ENCODE measurements at regions of chr5 and their contacts with region 1.

Region 1: GRCh38 chr5:55159763-55160492 is at the start of gene GPX8:
- DNase-seq: peak; percentile 61
- ATAC-seq: peak; percentile 70
- H3K4me3 Mint-ChIP-seq: no peak within 1 kb of the TSS
- H3K27ac Mint-ChIP-seq: no peak within 1 kb of the TSS
- H3K4me1 Mint-ChIP-seq: peaks cover 4% of the 10 kb centered on the region
- H3K27me3 Mint-ChIP-seq: peaks cover 47% of the 10 kb centered on the region
- total RNA-seq, gene GPX8: not detected

Region 2: DNA sequence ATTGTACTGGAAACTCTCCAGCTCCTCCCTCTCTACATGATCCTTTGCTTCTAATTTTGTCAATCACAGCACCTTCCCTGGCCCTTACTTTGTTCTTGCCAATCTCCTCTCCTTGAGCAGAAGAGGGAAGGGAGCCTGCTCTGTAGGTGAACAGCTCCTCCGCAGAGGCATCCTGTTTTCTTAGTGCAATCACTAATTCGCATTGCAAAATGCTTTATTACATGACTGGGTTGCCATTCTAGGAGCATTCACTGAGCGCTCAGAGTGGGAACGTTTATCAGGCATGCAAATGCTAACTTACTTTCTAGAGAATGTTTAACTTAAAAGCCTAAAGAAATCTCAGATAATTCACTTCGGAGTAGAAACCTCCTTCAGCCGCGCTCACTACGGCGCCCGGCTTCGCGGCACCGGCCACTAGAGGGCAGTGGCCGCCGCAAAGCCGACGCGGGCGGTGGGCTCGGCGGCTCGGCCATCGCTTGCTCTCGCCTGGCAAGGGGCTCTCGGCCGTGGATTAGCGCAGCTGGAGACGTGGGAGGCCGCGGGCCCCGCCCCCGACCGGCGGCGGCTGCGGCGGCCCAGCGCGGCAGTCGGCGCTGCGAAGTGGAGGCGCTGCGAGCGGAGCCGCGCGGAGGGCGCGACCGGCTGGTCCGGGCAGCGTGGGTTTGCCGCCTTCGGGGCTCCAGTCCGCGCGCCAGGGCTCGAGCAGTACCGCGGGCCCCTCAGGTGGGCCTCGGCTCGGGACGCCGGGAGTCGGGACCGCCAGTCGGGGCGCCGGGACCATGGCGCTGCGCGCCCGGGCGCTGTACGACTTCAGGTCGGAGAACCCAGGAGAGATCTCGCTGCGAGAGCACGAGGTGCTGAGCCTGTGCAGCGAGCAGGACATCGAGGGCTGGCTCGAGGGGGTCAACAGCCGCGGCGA is 642.5 kb before region 1 on chr5 and contains the start of gene SNX18:
- CTCF ChIA-PET with region 1: interaction called, 10 read pairs
- POLR2A ChIA-PET with region 1: no interaction called
- DNase-seq: peak; percentile 93
- ATAC-seq: peak; percentile 91
- H3K4me3 Mint-ChIP-seq: peak within 1 kb of the TSS; percentile 79
- H3K27ac Mint-ChIP-seq: no peak within 1 kb of the TSS
- H3K4me1 Mint-ChIP-seq: peaks cover 39% of the 10 kb centered on the region
- H3K27me3 Mint-ChIP-seq: peaks cover 19% of the 10 kb centered on the region
- total RNA-seq, gene SNX18: 17.1 to 19.3 TPM

Region 3: GRCh38 chr5:54852007-54852406 is 307.9 kb before region 1 on chr5:
- CTCF ChIA-PET with region 1: interaction called, 13 read pairs
- POLR2A ChIA-PET with region 1: no interaction called
- DNase-seq: no peak
- ATAC-seq: no peak
- H3K4me3 Mint-ChIP-seq: no peak overlapping the region
- H3K27ac Mint-ChIP-seq: no peak overlapping the region
- H3K4me1 Mint-ChIP-seq: peaks cover 3% of the 10 kb centered on the region
- H3K27me3 Mint-ChIP-seq: peaks cover 22% of the 10 kb centered on the region

Region 4: DNA sequence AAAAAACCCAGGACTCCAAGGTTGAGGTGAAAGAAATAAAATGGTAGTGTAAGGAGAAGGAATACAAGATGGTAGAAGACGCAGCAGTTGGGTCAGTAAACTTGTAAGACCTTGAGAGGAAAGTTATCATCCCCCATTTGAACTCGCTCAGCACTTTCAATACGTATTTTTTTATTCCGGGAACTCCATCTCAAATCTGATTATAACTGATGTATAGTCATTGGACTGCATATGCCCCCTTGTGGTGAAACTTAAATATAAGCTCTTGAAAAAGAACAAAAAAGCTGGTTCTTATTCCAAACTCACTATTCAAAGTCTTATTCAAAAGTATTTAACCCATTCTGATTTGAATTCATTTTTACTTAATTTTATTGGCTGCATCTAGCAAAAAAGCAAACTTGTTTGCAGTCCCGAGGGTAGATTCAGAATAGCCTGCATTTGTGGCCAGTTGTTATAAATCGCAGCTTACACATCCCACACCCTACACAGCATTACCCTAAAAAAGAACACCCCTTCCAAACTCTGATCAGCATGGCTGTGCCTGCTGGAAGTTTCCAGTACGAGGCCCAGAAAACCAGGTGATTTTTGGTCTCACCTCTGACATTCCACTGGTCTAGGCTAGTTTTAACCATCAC is 292.5 kb before region 1 on chr5:
- CTCF ChIA-PET with region 1: interaction called, 33 read pairs
- POLR2A ChIA-PET with region 1: no interaction called
- DNase-seq: no peak
- ATAC-seq: peak; percentile 49
- H3K4me3 Mint-ChIP-seq: no peak overlapping the region
- H3K27ac Mint-ChIP-seq: no peak overlapping the region
- H3K4me1 Mint-ChIP-seq: peaks cover 20% of the 10 kb centered on the region
- H3K27me3 Mint-ChIP-seq: peaks cover 41% of the 10 kb centered on the region

Region 5: GRCh38 chr5:54895816-54896341 is 264.0 kb before region 1 on chr5:
- CTCF ChIA-PET with region 1: interaction called, 171 read pairs
- POLR2A ChIA-PET with region 1: no interaction called
- DNase-seq: no peak
- ATAC-seq: no peak
- H3K4me3 Mint-ChIP-seq: no peak overlapping the region
- H3K27ac Mint-ChIP-seq: no peak overlapping the region
- H3K4me1 Mint-ChIP-seq: peaks cover 4% of the 10 kb centered on the region
- H3K27me3 Mint-ChIP-seq: peaks cover 55% of the 10 kb centered on the region

Region 6: GRCh38 chr5:55102348-55102747 is 57.6 kb before region 1 on chr5 and contains the start of gene GZMA:
- CTCF ChIA-PET with region 1: interaction called, 10 read pairs
- POLR2A ChIA-PET with region 1: no interaction called
- DNase-seq: peak; percentile 68
- ATAC-seq: peak; percentile 78
- H3K4me3 Mint-ChIP-seq: peak within 1 kb of the TSS; percentile 84
- H3K27ac Mint-ChIP-seq: peak within 1 kb of the TSS; percentile 94
- H3K4me1 Mint-ChIP-seq: peaks cover 86% of the 10 kb centered on the region
- H3K27me3 Mint-ChIP-seq: peaks cover 2% of the 10 kb centered on the region
- total RNA-seq, gene GZMA: 356 to 365 TPM

Region 7: DNA sequence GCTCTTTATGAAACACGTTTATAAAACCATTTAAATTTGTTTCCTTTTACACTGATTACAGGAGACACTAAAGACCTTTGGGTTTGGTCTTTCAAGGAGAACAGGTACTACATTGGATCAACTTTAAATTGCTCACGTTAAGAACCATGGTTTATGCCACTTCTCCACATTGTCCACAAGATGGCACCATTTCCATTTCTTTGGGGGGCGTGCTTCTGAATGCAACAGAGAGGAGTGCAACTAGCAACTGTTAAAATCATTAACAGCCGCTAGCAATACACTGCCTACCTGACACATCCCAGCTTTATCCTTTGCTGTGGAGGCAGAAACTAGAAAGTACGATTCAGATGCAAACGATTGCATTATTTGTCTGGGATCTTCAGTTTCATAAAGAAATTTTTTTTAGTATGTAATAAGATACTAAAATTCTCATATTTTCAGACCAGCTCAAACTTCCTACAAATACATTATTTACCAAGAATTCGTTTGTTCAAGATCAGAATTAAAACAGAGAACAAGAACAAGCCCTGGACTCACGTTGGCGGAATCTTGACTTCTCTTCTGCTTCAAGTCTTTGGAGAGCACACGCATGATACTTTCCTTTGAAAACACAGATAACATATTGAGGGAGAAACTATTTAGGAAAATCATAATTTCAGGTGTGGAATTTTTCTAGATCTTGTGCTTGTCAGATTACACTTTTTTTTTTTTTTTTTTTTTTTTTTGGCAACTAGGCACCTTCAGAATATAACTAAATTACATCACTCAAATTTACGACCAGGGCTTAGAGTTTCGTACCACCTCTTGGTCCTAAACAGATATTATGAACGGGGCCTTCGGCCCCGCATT is 12.3 kb after region 1 on chr5:
- CTCF ChIA-PET with region 1: interaction called, 27 read pairs
- POLR2A ChIA-PET with region 1: no interaction called
- DNase-seq: peak; percentile 82
- ATAC-seq: peak; percentile 53
- H3K4me3 Mint-ChIP-seq: peak overlapping the region; percentile 83
- H3K27ac Mint-ChIP-seq: no peak overlapping the region
- H3K4me1 Mint-ChIP-seq: peaks cover 40% of the 10 kb centered on the region
- H3K27me3 Mint-ChIP-seq: peaks cover 57% of the 10 kb centered on the region

Measured in activated CD8-positive, alpha-beta T cell treated with anti-CD3 and anti-CD28 coated beads, Interleukin-2, amount 10 ng/mL, durations not matched to agents 7 days and 5 days (primary cell).